H1 (cell line): ENCODE measurements at regions of chr3 and their contacts with region 1.

Region 1: GRCh38 chr3:195850857-195851543 is 39.3 kb upstream of the MUC4 start:
- DNase-seq: peak; percentile 70 to 92
- H3K4me3 ChIP-seq: no peak overlapping the region
- H3K27ac ChIP-seq: no peak overlapping the region
- H3K4me1 ChIP-seq: no peaks in the 10 kb centered on the region; a peak in 1 of 7 replicates
- H3K27me3 ChIP-seq: no peaks in the 10 kb centered on the region
- CTCF ChIP-seq: peak; percentile 100
- EP300 ChIP-seq: no peak
- POLR2A ChIP-seq: no peak
- RAD21 ChIP-seq: peak; percentile 99 to 100

Region 2: DNA sequence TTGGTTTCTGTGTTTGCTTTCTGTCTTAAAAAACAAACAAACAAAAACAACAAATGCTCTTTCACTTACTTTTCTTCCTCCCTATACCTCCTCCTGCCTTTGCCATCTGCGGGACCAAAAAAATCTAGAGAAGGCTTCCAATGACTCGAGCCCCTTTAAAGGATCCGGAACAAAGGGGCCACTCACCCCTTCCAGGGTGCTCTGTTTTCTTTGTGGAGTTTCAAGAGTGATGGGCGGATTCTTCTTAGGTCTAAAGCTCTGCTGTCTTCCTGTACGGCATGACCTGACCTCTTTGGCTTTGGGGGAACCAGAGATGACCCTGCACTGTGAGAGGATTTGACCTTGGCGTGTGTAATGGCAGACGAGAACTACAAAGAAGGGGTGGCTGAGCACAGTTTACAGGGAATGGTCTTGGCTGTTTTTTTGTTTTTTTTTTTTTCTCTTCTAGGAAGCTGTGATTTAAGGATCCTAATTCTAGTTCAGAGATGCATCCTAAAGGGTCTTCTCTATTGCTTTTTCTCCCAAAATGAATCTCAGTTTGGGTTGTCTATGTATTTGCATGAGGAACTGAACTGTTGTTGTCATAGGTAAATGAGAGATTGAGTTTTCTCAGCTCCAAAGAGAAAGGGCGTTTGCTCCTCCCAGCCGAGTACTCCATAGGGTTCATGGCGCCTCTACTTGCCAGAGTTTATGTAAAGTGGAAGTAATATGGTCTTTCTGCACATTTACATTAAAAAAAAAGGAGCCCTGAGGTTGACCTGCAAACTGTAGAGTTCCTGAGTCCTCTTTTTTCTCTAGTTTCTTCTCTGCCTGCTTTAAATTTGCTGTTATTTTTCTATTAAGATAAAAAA is 132.3 kb before region 1 on chr3:
- CTCF ChIA-PET with region 1: interaction called, 10 read pairs
- POLR2A ChIA-PET with region 1: no interaction called
- DNase-seq: no peak
- H3K4me3 ChIP-seq: no peak overlapping the region
- H3K27ac ChIP-seq: no peak overlapping the region
- H3K4me1 ChIP-seq: peaks cover 0 to 7% (median 3%) of the 10 kb centered on the region in 4 experiments; a peak in 5 of 7 replicates
- H3K27me3 ChIP-seq: no peaks in the 10 kb centered on the region; a peak in 1 of 7 replicates
- CTCF ChIP-seq: no peak
- EP300 ChIP-seq: no peak
- POLR2A ChIP-seq: no peak
- RAD21 ChIP-seq: no peak

Region 3: DNA sequence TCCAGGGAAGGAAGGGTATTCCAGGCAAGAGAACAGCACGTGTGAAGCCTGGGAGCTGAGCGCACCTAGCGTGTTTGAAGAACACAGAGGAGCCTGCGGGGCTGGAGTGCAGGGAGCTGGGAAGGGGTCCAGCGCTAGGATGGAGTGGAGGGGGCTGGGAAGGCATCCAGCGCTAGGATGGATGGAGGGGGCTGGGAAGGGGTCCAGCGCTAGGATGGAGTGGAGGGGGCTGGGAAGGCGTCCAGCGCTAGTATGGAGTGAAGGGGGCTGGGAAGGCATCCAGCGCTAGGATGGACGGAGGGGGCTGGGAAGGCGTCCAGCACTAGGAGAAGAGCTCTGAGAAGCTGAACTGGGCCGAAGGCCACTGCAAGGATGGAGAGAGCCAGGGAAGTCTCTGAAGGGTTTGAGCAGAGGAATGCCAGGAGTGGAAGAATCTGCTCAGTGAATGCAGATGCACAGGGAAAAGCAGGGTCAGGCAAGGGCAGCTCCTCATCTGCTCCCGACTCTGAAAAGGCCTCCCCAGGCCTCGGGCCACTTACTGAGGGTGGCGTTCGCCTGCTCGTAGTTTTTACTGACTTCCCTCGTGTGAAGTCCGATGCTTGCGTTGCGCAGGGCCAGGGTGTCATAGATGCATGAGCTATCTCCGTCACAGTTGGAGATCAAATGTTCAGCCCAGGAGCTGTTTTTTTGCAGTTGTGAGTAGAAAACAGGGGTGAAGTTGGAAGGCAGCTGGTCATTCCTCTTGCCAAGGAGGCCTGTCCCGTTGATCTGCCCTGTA is 90.5 kb before region 1 on chr3:
- CTCF ChIA-PET with region 1: interaction called, 33 read pairs
- POLR2A ChIA-PET with region 1: no interaction called
- DNase-seq: peak in 1 of 2 experiments; percentile 31
- H3K4me3 ChIP-seq: no peak overlapping the region
- H3K27ac ChIP-seq: no peak overlapping the region
- H3K4me1 ChIP-seq: peaks cover 0 to 8% (median 3%) of the 10 kb centered on the region in 4 experiments; a peak in 2 of 7 replicates
- H3K27me3 ChIP-seq: no peaks in the 10 kb centered on the region; a peak in 2 of 7 replicates
- CTCF ChIP-seq: no peak
- EP300 ChIP-seq: no peak
- POLR2A ChIP-seq: no peak
- RAD21 ChIP-seq: no peak

Region 4: GRCh38 chr3:195815169-195815771 is 35.7 kb before region 1 on chr3:
- CTCF ChIA-PET with region 1: interaction called, 116 read pairs
- POLR2A ChIA-PET with region 1: no interaction called
- DNase-seq: no peak
- H3K4me3 ChIP-seq: no peak overlapping the region
- H3K27ac ChIP-seq: no peak overlapping the region
- H3K4me1 ChIP-seq: peaks cover 0 to 10% (median 5%) of the 10 kb centered on the region in 4 experiments; a peak in 6 of 7 replicates
- H3K27me3 ChIP-seq: no peaks in the 10 kb centered on the region; a peak in 1 of 7 replicates
- CTCF ChIP-seq: no peak
- EP300 ChIP-seq: no peak
- POLR2A ChIP-seq: no peak
- RAD21 ChIP-seq: no peak

Region 5: DNA sequence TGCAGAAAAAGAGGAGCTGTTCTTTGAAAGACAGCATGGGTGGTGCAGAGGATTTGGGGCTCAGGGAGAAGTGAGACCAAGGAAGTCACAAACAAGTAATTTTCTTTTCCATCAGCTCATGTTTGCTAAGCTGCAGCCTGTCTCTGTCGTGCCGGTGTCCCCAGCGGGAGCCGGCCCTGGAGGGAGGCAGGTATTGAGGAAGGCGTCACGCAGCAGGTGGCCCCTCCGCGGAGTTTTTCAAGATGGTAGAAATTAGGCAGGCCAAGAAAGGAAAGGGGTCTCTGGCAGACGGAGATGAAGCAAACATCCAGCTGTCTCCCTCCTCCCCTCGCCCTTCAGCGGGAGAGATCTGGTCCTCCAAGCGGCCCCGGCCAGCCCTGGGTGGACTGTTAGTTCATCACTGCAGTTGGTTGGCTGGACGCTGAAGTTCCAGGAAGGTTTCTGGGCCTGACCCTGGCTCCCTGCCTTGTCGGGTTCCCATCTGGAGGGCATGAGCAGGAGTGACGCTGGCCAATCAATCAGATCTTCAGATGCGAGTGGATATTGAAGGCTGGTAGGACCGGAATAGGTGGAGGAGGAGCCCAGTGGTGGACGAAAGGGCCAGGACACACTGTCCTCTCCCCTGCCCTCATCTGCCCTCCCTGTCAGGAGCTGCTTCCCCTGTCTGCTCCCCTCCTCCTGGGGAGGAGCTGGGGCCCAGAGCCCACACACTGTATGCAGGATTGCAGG is 11.6 kb before region 1 on chr3:
- CTCF ChIA-PET with region 1: interaction called, 45 read pairs
- POLR2A ChIA-PET with region 1: no interaction called
- DNase-seq: no peak
- H3K4me3 ChIP-seq: no peak overlapping the region
- H3K27ac ChIP-seq: no peak overlapping the region
- H3K4me1 ChIP-seq: peaks cover 0 to 10% (median 5%) of the 10 kb centered on the region in 4 experiments; a peak in 6 of 7 replicates
- H3K27me3 ChIP-seq: no peaks in the 10 kb centered on the region
- CTCF ChIP-seq: no peak
- EP300 ChIP-seq: no peak
- POLR2A ChIP-seq: no peak
- RAD21 ChIP-seq: no peak

Region 6: GRCh38 chr3:195894780-195895607 is 44.0 kb after region 1 on chr3:
- CTCF ChIA-PET with region 1: interaction called, 499 read pairs
- POLR2A ChIA-PET with region 1: interaction called, 3 read pairs
- DNase-seq: peak in 1 of 2 experiments; percentile 75
- H3K4me3 ChIP-seq: peak overlapping the region; percentile 35 to 95 (median 70)
- H3K27ac ChIP-seq: no peak overlapping the region
- H3K4me1 ChIP-seq: peaks cover 0 to 28% (median 17%) of the 10 kb centered on the region in 4 experiments; a peak in 6 of 7 replicates
- H3K27me3 ChIP-seq: no peaks in the 10 kb centered on the region
- CTCF ChIP-seq: peak in 2 of 3 experiments; percentile 93 to 94; a peak in 3 of 4 replicates
- EP300 ChIP-seq: no peak
- POLR2A ChIP-seq: 0 out of 3 replicates have a peak, but pooled peaks of 1 of the 2 experiments have one; percentile 26
- RAD21 ChIP-seq: peak; percentile 89 to 93; a peak in 2 of 4 replicates

Region 7: DNA sequence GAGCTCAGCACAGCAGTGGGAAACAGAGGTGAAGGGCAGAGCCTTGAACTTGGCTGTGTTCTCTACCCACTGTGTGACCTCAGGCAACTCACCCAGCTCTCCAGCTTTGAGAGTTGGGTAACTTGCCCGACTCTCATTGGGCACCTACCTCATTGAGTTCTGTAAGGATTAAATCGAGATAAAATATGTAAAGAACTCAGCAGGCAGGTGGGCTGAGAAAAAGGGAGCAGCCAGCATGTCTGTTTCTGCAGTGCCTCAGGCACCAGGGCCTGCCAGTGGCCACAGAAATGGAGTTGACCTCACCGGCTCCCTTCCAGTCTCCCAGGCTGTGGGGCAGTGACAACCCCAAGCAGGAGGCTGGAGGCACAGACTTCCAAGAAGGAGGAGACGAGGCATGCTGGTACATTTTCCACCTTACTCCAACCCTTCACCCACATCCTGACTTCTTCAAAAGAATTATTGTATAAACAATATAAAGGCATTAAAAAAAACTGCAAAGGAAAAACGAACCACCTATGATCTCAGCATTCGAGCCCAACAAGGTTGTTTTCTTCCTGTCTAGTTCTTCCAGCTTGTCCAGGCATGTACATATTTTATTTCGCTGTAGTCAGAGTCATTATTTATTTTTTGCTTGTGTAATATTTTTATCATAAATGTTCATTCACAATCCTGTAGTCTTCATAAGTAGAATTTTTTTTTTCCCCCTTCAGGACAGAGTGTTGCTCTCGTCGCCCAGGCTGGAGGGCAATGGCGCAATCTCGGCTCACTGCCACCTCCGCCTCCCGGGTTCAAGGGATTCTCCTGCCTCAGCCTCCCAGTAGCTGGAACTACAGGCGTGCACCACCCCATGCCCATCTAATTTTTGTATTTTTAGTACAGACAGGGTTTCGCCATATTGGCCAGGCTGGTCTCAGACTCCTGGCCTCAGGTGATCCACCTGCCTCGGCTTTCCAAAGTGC is 285.3 kb after region 1 on chr3:
- CTCF ChIA-PET with region 1: no interaction called
- POLR2A ChIA-PET with region 1: no interaction called
- DNase-seq: no peak
- H3K4me3 ChIP-seq: no peak overlapping the region
- H3K27ac ChIP-seq: no peak overlapping the region
- H3K4me1 ChIP-seq: peaks cover 0 to 5% (median 0%) of the 10 kb centered on the region in 4 experiments; a peak in 1 of 7 replicates
- H3K27me3 ChIP-seq: no peaks in the 10 kb centered on the region
- CTCF ChIP-seq: no peak
- EP300 ChIP-seq: no peak
- POLR2A ChIP-seq: no peak
- RAD21 ChIP-seq: no peak

Region 8: DNA sequence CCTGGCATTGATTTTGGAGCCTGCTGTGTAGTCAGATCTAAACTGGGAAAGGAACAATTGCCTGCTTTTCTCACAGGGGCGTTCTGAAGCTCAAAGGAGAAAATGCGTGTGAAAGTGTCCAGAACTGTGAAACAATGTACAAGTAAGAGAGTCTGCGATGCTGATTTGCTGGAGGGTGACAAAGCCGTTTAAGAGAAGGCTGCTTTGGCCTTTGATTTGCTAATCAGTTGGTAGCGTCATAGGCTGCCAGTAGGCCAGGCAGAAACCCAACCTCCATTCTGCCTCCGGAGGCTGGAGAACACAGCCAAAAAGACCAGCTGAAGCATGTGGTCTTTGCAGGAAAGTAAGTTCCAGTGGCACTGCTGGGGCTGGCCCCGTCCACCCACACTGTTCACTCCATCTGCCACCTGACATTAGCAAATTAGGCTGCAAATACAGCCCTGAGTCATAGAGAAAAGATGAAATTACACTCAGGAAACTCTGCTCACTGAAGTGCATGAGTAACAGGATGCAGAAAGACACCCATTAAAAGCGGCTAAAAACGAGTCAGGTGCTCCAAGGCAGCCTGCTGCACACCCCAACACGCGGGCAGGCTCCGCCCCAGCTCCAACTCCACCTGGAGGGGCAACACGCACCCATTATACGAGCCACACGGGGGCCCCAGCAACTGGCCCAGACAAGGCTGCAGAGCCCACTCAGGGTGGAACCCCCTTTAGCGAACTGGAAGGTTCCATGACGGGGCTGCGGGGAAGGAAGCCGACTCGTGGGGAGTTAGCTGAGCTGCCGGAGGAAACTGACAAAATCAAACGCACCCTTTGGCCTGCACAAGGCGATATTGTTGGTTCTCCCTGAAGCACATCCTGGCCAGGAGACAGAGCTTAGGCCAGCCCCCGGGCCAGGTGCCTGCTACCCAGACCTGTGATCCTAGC is 328.6 kb after region 1 on chr3:
- CTCF ChIA-PET with region 1: no interaction called
- POLR2A ChIA-PET with region 1: no interaction called
- DNase-seq: no peak
- H3K4me3 ChIP-seq: no peak overlapping the region
- H3K27ac ChIP-seq: peak overlapping the region; percentile 33; the same call in 1 of the 2 replicates
- H3K4me1 ChIP-seq: peaks cover 4 to 15% (median 11%) of the 10 kb centered on the region in 4 experiments; a peak in 6 of 7 replicates
- H3K27me3 ChIP-seq: no peaks in the 10 kb centered on the region
- CTCF ChIP-seq: peak; percentile 14 to 20 (median 14); a peak in 3 of 4 replicates
- EP300 ChIP-seq: no peak
- POLR2A ChIP-seq: peak in 1 of 2 experiments; percentile 57; a peak in 1 of 3 replicates
- RAD21 ChIP-seq: peak; percentile 12 to 34; a peak in 1 of 4 replicates